ENCODE measurements at regions of chr12 and their contacts with region 1.

Region 1: DNA sequence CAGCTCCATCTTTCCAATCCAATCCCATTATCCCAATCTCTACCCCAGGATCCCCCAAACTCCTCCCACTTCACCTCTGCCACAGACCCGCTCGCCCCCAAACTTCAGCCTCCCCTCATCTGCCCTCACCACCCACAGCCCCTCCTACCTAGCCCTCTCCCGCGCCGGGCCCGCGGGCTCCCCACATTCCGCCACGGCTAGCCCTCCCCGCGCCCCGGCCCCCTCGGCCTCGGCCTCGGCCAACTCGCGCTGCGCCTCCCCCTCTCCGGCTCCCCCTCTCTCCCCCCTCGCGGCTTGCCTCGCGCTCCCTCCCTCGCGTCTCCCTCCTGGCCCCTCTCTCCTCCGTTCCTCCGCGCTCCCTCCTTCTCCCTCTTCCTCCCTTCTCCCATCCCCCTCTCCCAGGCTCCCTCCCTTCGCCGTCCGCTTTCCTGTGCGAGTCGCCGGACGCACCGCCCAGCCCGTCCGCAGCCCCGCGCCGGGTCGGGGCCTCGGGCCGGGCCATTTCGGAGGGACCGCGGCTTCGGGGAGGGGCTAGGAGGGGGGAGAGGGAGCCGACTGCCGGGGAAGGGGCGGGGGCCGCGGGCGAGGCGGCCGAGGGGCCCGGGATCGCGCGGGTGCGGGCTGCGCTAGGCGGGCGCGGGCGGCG is at the start of gene ATN1:
- DNase-seq: peak; percentile 51
- ATAC-seq: peak; percentile 34
- H3K4me3 Mint-ChIP-seq: peak within 1 kb of the TSS; percentile 78
- H3K27ac Mint-ChIP-seq: peak within 1 kb of the TSS; percentile 53
- H3K4me1 Mint-ChIP-seq: peaks cover 68% of the 10 kb centered on the region
- H3K27me3 Mint-ChIP-seq: no peaks in the 10 kb centered on the region
- total RNA-seq, gene ATN1: 21.6 to 24.5 TPM

Region 2: GRCh38 chr12:6884539-6884938 is 43.0 kb before region 1 on chr12:
- CTCF ChIA-PET with region 1: no interaction called
- POLR2A ChIA-PET with region 1: no interaction called
- DNase-seq: no peak
- ATAC-seq: no peak
- H3K4me3 Mint-ChIP-seq: no peak overlapping the region
- H3K27ac Mint-ChIP-seq: no peak overlapping the region
- H3K4me1 Mint-ChIP-seq: peaks cover 3% of the 10 kb centered on the region
- H3K27me3 Mint-ChIP-seq: no peaks in the 10 kb centered on the region

Region 3: DNA sequence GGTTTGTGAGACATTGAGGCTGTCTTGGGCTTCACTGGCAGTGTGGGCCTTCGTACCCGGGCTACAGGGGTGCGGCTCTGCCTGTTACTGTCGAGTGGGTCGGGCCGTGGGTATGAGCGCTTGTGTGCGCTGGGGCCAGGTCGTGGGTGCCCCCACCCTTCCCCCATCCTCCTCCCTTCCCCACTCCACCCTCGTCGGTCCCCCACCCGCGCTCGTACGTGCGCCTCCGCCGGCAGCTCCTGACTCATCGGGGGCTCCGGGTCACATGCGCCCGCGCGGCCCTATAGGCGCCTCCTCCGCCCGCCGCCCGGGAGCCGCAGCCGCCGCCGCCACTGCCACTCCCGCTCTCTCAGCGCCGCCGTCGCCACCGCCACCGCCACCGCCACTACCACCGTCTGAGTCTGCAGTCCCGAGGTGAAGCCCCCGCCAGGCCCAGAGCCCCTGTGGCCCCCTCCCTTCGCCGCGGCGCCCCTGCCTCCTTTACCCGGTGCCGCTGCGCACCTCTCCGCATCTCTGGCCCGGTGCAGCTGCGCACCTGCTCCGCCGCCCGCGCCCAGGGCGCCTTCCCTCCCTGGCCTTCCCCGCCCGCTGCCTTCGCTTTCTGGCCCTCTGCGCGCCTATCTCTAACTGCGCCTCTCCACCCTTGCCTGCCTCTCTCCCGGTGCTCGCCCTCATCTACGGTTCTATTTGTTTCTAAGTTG is 13.1 kb before region 1 on chr12 and contains the start of gene ENO2:
- CTCF ChIA-PET with region 1: interaction called, 17 read pairs
- POLR2A ChIA-PET with region 1: interaction called, 7 read pairs
- DNase-seq: peak; percentile 87
- ATAC-seq: peak; percentile 92
- H3K4me3 Mint-ChIP-seq: peak within 1 kb of the TSS; percentile 92
- H3K27ac Mint-ChIP-seq: peak within 1 kb of the TSS; percentile 84
- H3K4me1 Mint-ChIP-seq: peaks cover 45% of the 10 kb centered on the region
- H3K27me3 Mint-ChIP-seq: peaks cover 5% of the 10 kb centered on the region
- total RNA-seq, gene ENO2: 133 to 141 TPM

Region 4: GRCh38 chr12:6965026-6965661 is 37.6 kb after region 1 on chr12:
- CTCF ChIA-PET with region 1: interaction called, 35 read pairs
- POLR2A ChIA-PET with region 1: interaction called, 8 read pairs
- DNase-seq: peak; percentile 93
- ATAC-seq: peak; percentile 65
- H3K4me3 Mint-ChIP-seq: peak overlapping the region; percentile 12
- H3K27ac Mint-ChIP-seq: peak overlapping the region; percentile 77
- H3K4me1 Mint-ChIP-seq: peaks cover 75% of the 10 kb centered on the region
- H3K27me3 Mint-ChIP-seq: no peaks in the 10 kb centered on the region

Region 5: DNA sequence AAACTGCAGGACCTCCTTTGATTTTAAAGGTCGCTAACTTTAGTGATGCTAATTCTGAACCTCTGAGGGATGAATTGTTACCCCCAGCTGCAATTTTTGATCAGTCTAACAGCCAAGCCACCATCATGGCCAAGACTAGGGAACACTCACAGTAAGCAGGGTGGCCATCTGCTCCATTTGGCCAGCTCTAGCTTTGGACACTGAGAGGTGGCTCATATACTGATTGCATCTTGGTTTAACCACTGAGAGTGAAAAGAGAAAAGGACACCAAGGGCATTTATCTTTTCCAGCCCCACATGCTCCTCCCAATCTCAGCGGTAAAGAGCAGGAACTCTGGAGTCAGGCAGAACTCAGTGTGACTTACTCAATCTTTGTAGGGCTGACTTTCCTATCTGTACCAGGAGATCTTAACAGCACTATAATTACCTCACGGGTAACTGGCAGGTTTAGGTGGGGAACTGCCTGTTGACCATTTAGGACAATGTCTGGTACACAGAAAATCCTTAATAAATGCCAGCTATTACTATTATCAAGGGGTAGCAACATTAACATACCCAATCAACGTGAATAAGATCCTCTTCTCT is 84.6 kb after region 1 on chr12:
- CTCF ChIA-PET with region 1: no interaction called
- POLR2A ChIA-PET with region 1: no interaction called
- DNase-seq: no peak
- ATAC-seq: no peak
- H3K4me3 Mint-ChIP-seq: no peak overlapping the region
- H3K27ac Mint-ChIP-seq: no peak overlapping the region
- H3K4me1 Mint-ChIP-seq: peaks cover 23% of the 10 kb centered on the region
- H3K27me3 Mint-ChIP-seq: no peaks in the 10 kb centered on the region

Region 6: GRCh38 chr12:7038591-7038990 is 111.1 kb after region 1 on chr12:
- CTCF ChIA-PET with region 1: no interaction called
- POLR2A ChIA-PET with region 1: no interaction called
- DNase-seq: no peak
- ATAC-seq: no peak
- H3K4me3 Mint-ChIP-seq: no peak overlapping the region
- H3K27ac Mint-ChIP-seq: no peak overlapping the region
- H3K4me1 Mint-ChIP-seq: peaks cover 5% of the 10 kb centered on the region
- H3K27me3 Mint-ChIP-seq: peaks cover 12% of the 10 kb centered on the region

Region 7: GRCh38 chr12:7229741-7230140 is 302.2 kb after region 1 on chr12:
- CTCF ChIA-PET with region 1: no interaction called
- POLR2A ChIA-PET with region 1: no interaction called
- DNase-seq: no peak
- ATAC-seq: no peak
- H3K4me3 Mint-ChIP-seq: no peak overlapping the region
- H3K27ac Mint-ChIP-seq: no peak overlapping the region
- H3K4me1 Mint-ChIP-seq: no peaks in the 10 kb centered on the region
- H3K27me3 Mint-ChIP-seq: peaks cover 30% of the 10 kb centered on the region

Measured in activated CD8-positive, alpha-beta T cell treated with anti-CD3 and anti-CD28 coated beads, Interleukin-2, amount 10 ng/mL, durations not matched to agents 7 days and 5 days (primary cell).